ENCODE measurements at regions of chr2 and their contacts with region 1.

Region 1: GRCh38 chr2:152251811-152252210 is 76.2 kb upstream of the STAM2 start:
- DNase-seq: no peak
- ATAC-seq: no peak
- H3K4me3 Mint-ChIP-seq: no peak overlapping the region
- H3K27ac Mint-ChIP-seq: no peak overlapping the region
- H3K4me1 Mint-ChIP-seq: no peaks in the 10 kb centered on the region
- H3K27me3 Mint-ChIP-seq: peaks cover 23% of the 10 kb centered on the region

Region 2: GRCh38 chr2:152222975-152223637 is 28.7 kb before region 1 on chr2:
- CTCF ChIA-PET with region 1: no interaction called
- POLR2A ChIA-PET with region 1: no interaction called
- intact Hi-C with region 1: no loop called
- DNase-seq: peak; percentile 9
- ATAC-seq: no peak
- H3K4me3 Mint-ChIP-seq: no peak overlapping the region
- H3K27ac Mint-ChIP-seq: no peak overlapping the region
- H3K4me1 Mint-ChIP-seq: no peaks in the 10 kb centered on the region
- H3K27me3 Mint-ChIP-seq: peaks cover 8% of the 10 kb centered on the region

Region 3: GRCh38 chr2:152278526-152278925 is 26.7 kb after region 1 on chr2:
- CTCF ChIA-PET with region 1: interaction called, 3 read pairs
- POLR2A ChIA-PET with region 1: interaction called, 11 read pairs
- intact Hi-C with region 1: no loop called
- DNase-seq: no peak
- ATAC-seq: no peak
- H3K4me3 Mint-ChIP-seq: no peak overlapping the region
- H3K27ac Mint-ChIP-seq: no peak overlapping the region
- H3K4me1 Mint-ChIP-seq: no peaks in the 10 kb centered on the region
- H3K27me3 Mint-ChIP-seq: peaks cover 16% of the 10 kb centered on the region

Region 4: DNA sequence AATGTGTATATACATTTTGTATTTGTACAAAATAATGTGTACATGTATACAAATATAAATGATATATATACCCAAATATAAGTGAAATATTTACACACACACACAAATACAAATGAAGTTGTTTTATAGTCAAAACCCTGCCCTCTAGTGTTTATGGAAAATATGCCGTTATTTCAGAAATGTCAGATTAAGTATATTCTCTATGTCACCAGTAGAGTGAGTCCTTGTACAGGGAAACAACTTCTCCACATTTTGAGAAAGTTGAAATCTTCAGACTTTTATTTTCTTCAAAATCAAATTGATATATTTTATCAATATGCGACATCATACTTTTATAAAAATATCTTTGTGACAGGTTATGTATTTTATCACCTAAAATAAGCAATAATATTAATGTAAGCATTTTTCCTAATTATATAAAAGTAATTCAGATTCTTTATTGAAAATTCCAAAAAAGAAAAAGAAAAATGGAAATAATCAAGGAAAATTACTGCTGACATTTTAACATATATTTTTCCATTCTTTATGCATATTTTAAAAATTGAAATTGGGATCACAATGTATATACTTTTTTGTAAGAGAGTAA is 489.0 kb after region 1 on chr2:
- CTCF ChIA-PET with region 1: no interaction called
- POLR2A ChIA-PET with region 1: no interaction called
- intact Hi-C with region 1: no loop called
- DNase-seq: no peak
- ATAC-seq: peak; percentile 69
- H3K4me3 Mint-ChIP-seq: no peak overlapping the region
- H3K27ac Mint-ChIP-seq: no peak overlapping the region
- H3K4me1 Mint-ChIP-seq: peaks cover 2% of the 10 kb centered on the region
- H3K27me3 Mint-ChIP-seq: no peaks in the 10 kb centered on the region

Measured in activated CD4-positive, alpha-beta T cell treated with anti-CD3 and anti-CD28 coated beads for 36 hours (primary cell).